ENCODE measurements at regions of chr17 and their contacts with region 1.

Region 1: DNA sequence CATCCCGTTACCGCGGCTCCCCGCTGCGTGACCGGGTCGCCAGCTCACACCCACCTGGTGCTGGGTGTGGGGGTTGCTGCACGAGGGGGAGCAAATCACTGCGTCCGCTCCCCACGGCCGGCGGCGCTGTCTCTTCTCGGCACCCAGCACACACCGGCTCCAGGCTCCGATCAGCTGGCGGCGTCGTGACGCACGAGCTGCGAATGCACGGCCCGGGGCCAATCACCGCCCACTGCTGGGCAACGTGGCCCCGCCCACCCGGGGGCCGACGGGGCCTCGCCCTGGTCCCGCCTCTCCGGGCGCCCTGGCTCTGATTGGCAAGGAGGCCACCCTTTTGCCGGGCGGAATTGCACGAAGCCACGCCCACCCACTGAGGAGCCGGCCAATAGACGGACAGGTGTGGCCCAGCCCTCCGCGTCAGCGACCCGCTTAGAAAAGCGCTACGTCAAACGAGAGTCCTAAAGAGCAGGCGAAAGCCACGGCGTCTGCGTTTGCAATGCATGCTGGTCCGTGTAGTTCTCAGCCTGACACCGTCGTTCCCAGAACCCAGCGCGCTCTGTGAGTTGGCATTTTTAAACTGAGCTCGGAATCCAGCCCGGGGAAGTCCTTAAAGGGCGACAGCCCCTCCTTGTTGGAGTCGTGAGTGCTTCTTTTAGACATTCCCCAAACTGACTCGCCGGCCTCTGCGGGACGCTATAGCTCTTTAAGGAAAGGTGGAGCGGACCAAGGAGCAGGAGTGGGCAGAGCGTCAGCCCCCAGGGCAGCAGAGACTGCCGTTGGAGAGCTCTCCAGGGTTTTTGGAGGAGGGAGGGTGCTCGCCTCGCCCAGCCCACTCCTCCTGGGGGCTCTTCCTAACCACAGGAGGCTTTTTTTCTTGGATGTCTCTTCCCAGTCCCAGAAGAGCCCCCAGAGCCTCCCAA is 6.2 kb upstream of the TLCD2 start:
- DNase-seq: peak; percentile 99 to 100
- H3K4me3 ChIP-seq: peak overlapping the region; percentile 81
- H3K27ac ChIP-seq: peak overlapping the region; percentile 99
- H3K4me1 ChIP-seq: peaks cover 25% of the 10 kb centered on the region
- H3K27me3 ChIP-seq: no peaks in the 10 kb centered on the region
- CTCF ChIP-seq: peak; percentile 31; the same call in 1 of the 2 replicates

Region 2: DNA sequence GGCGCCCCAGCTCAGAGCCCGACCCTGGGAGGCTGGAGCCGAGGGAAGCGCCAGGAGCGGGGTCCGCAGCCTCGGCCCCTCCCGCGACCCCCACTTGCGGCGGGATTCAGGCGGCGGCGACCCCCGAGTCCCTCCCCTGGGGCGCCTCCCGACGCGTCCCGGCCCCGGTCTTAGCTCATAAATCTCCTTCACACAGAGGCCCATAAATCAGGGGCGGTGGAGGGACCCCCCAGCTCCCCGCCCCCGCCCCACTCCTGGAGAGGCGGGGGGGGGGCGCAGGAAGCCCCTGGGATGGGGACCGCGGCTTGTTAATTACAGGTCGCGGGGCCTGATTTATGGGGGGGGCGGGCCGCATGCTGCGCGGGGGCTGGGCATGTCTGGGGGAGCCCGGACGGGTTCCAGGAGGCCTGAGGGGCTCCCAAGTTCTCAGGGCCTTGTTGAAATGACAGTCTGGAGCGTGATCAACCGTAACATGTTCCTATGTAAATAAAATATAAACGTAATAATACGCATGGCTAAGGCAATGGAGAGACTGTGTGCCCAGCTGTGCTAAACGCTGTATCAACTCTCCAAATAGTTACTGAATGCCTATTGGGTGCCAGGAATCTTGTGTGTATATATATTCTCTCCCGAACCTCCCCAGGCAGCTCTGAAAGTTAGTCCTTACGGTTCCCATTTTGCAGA is 456.1 kb before region 1 on chr17:
- CTCF ChIA-PET with region 1: no interaction called
- POLR2A ChIA-PET with region 1: no interaction called
- intact Hi-C with region 1: loop called (anchors 1 kb)
- DNase-seq: no peak
- H3K4me3 ChIP-seq: peak overlapping the region; percentile 58; the same call in 1 of the 2 replicates
- H3K27ac ChIP-seq: no peak overlapping the region
- H3K4me1 ChIP-seq: peaks cover 10% of the 10 kb centered on the region; the same call in 1 of the 2 replicates
- H3K27me3 ChIP-seq: peaks cover 5% of the 10 kb centered on the region; the same call in 1 of the 2 replicates
- CTCF ChIP-seq: no peak

Region 3: DNA sequence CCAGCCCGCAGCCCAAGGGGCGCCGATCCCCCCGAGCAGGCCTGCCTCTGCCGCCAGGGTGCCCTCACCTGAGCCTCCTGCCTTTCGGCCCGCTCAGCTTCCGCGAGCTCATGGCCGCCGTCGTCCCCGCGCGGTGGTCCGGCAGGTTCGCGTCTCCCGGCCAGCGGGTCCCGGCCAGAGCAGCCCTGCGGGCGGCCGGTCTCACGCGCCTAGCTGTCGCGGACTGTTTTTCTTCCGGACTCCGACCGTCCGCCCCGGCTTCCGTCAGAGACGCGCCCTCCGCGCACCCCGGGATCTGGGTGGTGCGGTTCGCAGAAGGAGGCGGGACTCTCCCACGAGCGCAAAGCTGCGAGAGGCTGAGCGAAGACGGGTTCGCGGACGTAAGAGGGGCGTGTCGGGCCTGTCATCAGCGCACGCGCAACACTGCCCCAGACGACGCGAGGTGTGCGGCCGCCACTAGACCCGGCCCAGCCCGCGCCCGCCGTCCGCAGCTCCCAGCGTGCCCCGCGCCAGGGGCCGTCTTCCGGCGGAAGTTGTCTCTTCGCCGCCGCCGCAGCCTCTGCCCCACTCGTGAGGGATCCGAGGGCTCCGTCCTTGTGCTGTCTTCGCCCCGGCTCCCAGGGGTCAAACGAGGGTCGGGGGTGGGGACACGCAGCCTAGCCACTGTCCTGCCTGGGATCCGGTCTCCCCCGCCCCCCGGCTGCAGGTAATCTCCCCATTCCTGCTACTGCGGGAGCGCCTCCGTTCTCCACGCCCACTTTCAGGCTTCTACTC is 199.8 kb before region 1 on chr17 and contains the start of gene INPP5K:
- CTCF ChIA-PET with region 1: no interaction called
- POLR2A ChIA-PET with region 1: interaction called, 16 read pairs
- intact Hi-C with region 1: no loop called
- DNase-seq: peak; percentile 92 to 99
- H3K4me3 ChIP-seq: peak within 1 kb of the TSS; percentile 72
- H3K27ac ChIP-seq: peak within 1 kb of the TSS; percentile 63
- H3K4me1 ChIP-seq: peaks cover 13% of the 10 kb centered on the region
- H3K27me3 ChIP-seq: no peaks in the 10 kb centered on the region
- CTCF ChIP-seq: no peak
- total RNA-seq, gene INPP5K: 41.9 and 42.9 TPM in 2 replicates

Region 4: GRCh38 chr17:1673041-1673785 is 43.1 kb before region 1 on chr17:
- CTCF ChIA-PET with region 1: interaction called, 3 read pairs
- POLR2A ChIA-PET with region 1: no interaction called
- intact Hi-C with region 1: loop called (anchors 5 kb)
- DNase-seq: peak in 1 of 2 experiments; percentile 17
- H3K4me3 ChIP-seq: no peak overlapping the region
- H3K27ac ChIP-seq: no peak overlapping the region
- H3K4me1 ChIP-seq: no peaks in the 10 kb centered on the region
- H3K27me3 ChIP-seq: no peaks in the 10 kb centered on the region
- CTCF ChIP-seq: no peak

Region 5: GRCh38 chr17:1783834-1784611 is 67.7 kb after region 1 on chr17:
- CTCF ChIA-PET with region 1: interaction called, 11 read pairs
- POLR2A ChIA-PET with region 1: interaction called, 8 read pairs
- intact Hi-C with region 1: loop called (anchors 1 kb)
- DNase-seq: no peak
- H3K4me3 ChIP-seq: no peak overlapping the region
- H3K27ac ChIP-seq: no peak overlapping the region
- H3K4me1 ChIP-seq: peaks cover 10% of the 10 kb centered on the region
- H3K27me3 ChIP-seq: no peaks in the 10 kb centered on the region
- CTCF ChIP-seq: peak; percentile 79

Region 6: GRCh38 chr17:2011411-2012371 is 295.4 kb after region 1 on chr17:
- CTCF ChIA-PET with region 1: no interaction called
- POLR2A ChIA-PET with region 1: interaction called, 12 read pairs
- intact Hi-C with region 1: loop called (anchors 10 kb)
- DNase-seq: peak; percentile 97
- H3K4me3 ChIP-seq: peak overlapping the region; percentile 42
- H3K27ac ChIP-seq: peak overlapping the region; percentile 85
- H3K4me1 ChIP-seq: peaks cover 55% of the 10 kb centered on the region
- H3K27me3 ChIP-seq: no peaks in the 10 kb centered on the region
- CTCF ChIP-seq: no peak

Region 7: GRCh38 chr17:2054512-2055291 is 338.4 kb after region 1 on chr17 and contains the start of gene HIC1:
- CTCF ChIA-PET with region 1: interaction called, 11 read pairs
- POLR2A ChIA-PET with region 1: no interaction called
- intact Hi-C with region 1: no loop called
- DNase-seq: peak; percentile 57 to 84
- H3K4me3 ChIP-seq: peak within 1 kb of the TSS; percentile 66
- H3K27ac ChIP-seq: no peak within 1 kb of the TSS
- H3K4me1 ChIP-seq: peaks cover 7% of the 10 kb centered on the region; the same call in 1 of the 2 replicates
- H3K27me3 ChIP-seq: peaks cover 12% of the 10 kb centered on the region
- CTCF ChIP-seq: peak; percentile 81
- total RNA-seq, gene HIC1: 0.63 and 1.6 TPM in 2 replicates